ENCODE measurements at regions of chr19 and their contacts with region 1.

Region 1: DNA sequence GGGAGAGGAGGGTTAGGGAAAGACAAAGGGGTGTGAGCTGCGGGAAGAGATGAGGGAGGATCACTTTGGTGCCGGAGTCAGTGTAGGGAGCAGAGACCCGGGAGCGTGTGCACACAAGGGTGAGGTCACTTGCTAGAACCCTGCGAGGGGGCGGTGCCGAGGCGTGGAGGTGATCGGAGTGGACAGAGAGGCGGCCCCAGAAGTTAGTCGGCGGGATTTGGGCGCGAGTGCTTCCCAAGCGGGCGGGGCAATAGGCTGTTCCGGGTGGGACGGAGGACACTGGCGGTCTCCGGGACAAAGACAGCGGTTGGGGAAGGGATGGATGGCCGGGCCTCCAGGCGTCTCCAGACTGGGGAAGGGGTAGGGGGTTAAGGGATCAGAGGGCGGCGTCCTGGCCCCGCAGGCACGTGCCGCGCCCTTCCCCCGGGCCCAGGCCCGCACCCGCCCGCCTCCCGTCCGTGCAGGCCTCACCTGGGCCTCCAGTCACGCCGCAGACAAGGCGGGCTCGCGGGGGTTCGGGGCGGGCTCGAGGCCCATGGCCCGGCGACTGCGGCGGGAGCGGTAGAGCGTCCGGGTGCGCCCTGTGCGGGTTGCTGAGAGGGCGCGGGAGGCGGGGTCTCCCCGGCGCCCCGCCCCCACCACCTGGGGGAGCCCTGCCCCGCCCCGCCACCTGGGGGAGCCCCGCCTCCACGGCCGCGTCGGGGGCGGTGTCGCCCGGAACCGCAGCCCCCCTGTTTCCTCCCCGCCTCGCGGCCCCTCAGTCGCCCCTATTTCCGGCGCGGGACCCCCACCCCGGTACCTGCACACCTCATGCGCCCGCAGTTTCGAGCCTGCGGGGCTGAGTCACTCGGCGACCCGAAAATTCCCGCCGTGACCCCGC is at the start of gene LPAR2:
- DNase-seq: peak; percentile 52
- H3K4me3 Mint-ChIP-seq: peak within 1 kb of the TSS; percentile 75
- H3K27ac Mint-ChIP-seq: peak within 1 kb of the TSS; percentile 77
- H3K4me1 Mint-ChIP-seq: peaks cover 13% of the 10 kb centered on the region
- H3K27me3 Mint-ChIP-seq: no peaks in the 10 kb centered on the region
- CTCF ChIP-seq: no peak
- total RNA-seq, gene LPAR2: 15.5 and 17.4 TPM in 2 replicates

Region 2: GRCh38 chr19:19554074-19555023 is 73.5 kb before region 1 on chr19:
- CTCF ChIA-PET with region 1: interaction called, 9 read pairs
- POLR2A ChIA-PET with region 1: interaction called, 4 read pairs
- intact Hi-C with region 1: loop called (anchors 5 kb)
- DNase-seq: peak; percentile 66
- H3K4me3 Mint-ChIP-seq: no peak overlapping the region
- H3K27ac Mint-ChIP-seq: no peak overlapping the region
- H3K4me1 Mint-ChIP-seq: no peaks in the 10 kb centered on the region
- H3K27me3 Mint-ChIP-seq: no peaks in the 10 kb centered on the region
- CTCF ChIP-seq: peak; percentile 70

Region 3: DNA sequence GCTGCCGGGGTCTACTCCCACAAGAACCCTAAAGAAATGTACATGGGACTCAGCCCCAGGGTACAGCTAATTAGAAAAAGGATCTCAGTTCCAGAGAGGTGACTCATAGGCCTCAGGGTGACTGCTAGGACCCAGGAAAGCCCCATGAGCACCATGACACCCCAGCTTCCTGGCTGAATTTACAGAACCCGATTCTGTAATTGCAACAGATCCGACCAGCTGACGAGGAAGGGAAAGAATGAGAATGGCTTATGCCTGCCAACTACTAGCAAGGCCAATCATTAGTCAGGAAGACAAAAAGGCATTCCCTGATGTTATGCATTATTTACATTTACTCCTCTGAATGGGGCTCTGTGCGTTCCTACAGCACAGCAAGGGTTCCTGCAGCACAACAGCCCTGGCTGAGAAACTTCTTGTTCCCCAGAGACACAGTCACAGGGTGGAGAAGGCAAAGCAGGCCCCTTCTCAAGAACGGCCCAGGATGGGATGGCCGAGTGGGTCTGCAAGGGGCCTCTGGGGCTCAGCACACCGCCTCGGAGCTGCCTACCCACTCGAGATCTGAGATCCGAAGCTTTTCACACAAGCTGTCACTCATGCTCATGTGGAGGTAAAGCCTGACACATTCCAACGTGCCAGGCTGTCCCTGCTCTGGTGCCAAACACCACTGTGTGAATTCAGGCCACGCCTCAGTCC is 36.6 kb before region 1 on chr19:
- CTCF ChIA-PET with region 1: interaction called, 7 read pairs
- POLR2A ChIA-PET with region 1: interaction called, 16 read pairs
- intact Hi-C with region 1: no loop called
- DNase-seq: peak; percentile 98
- H3K4me3 Mint-ChIP-seq: peak overlapping the region; percentile 19
- H3K27ac Mint-ChIP-seq: peak overlapping the region; percentile 54
- H3K4me1 Mint-ChIP-seq: peaks cover 14% of the 10 kb centered on the region
- H3K27me3 Mint-ChIP-seq: no peaks in the 10 kb centered on the region
- CTCF ChIP-seq: no peak

Region 4: GRCh38 chr19:19606021-19606420 is 21.8 kb before region 1 on chr19:
- CTCF ChIA-PET with region 1: interaction called, 4 read pairs
- POLR2A ChIA-PET with region 1: interaction called, 11 read pairs
- intact Hi-C with region 1: no loop called
- DNase-seq: peak; percentile 76
- H3K4me3 Mint-ChIP-seq: no peak overlapping the region
- H3K27ac Mint-ChIP-seq: no peak overlapping the region
- H3K4me1 Mint-ChIP-seq: peaks cover 21% of the 10 kb centered on the region
- H3K27me3 Mint-ChIP-seq: no peaks in the 10 kb centered on the region
- CTCF ChIP-seq: no peak

Region 5: GRCh38 chr19:19615086-19615485 is 12.8 kb before region 1 on chr19:
- CTCF ChIA-PET with region 1: interaction called, 4 read pairs
- POLR2A ChIA-PET with region 1: interaction called, 14 read pairs
- intact Hi-C with region 1: no loop called
- DNase-seq: peak; percentile 48
- H3K4me3 Mint-ChIP-seq: no peak overlapping the region
- H3K27ac Mint-ChIP-seq: no peak overlapping the region
- H3K4me1 Mint-ChIP-seq: peaks cover 8% of the 10 kb centered on the region
- H3K27me3 Mint-ChIP-seq: no peaks in the 10 kb centered on the region
- CTCF ChIP-seq: no peak

Region 6: DNA sequence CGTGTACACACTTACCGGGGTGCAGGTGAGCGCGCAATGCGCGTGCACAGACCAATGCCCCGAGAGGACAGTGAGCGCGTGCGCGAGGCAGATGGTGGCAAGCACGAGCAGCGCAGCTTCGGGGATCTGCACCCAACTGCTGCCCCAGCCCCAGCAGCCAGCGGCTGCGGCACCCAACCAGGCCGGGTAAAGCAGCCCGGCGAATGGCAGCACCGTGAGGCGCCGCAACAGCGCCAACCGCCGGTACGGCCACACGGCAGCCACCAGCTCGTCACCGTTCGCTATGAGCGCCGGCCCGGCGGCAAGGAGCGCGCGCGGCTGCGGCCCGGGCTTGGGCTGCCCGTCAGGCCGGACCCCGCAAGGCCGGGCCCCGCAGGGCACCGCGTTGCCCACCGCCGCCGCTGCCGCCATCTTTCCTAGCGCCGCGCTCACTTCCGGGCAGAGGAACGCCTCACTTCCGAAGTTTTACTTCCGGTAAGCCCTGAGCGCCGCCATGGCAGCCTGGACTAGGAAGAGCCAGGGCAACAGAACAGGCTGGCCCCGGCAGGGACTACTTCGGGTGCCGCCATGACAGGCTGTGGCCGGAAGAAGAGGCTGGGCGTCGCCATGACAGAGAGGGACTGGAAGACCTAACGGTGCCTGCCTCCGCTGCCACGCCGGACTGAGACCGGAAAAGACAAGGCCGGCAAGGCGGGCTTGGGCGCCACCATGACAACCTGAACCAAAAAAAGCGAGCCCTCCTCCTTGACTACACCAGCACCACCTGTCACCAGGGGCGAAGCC is 35.6 kb after region 1 on chr19 and contains the start of gene ATP13A1:
- CTCF ChIA-PET with region 1: interaction called, 3 read pairs
- POLR2A ChIA-PET with region 1: interaction called, 12 read pairs
- intact Hi-C with region 1: no loop called
- DNase-seq: peak; percentile 98
- H3K4me3 Mint-ChIP-seq: peak within 1 kb of the TSS; percentile 79
- H3K27ac Mint-ChIP-seq: peak within 1 kb of the TSS; percentile 96
- H3K4me1 Mint-ChIP-seq: peaks cover 16% of the 10 kb centered on the region
- H3K27me3 Mint-ChIP-seq: no peaks in the 10 kb centered on the region
- CTCF ChIP-seq: no peak
- total RNA-seq, gene ATP13A1: 63.9 and 67.2 TPM in 2 replicates

Measured in MCF 10A (cell line).